Activated B cell treated with CpG ODN at 0.5 μM for 24 hours (primary cell): ENCODE measurements at regions of chr11 and their contacts with region 1.

Region 1: GRCh38 chr11:121929581-121929980 is 186.4 kb downstream of the BLID start:
- DNase-seq: no peak
- ATAC-seq: no peak
- H3K4me3 Mint-ChIP-seq: no peak overlapping the region
- H3K27ac Mint-ChIP-seq: no peak overlapping the region
- H3K4me1 Mint-ChIP-seq: no peaks in the 10 kb centered on the region
- H3K27me3 Mint-ChIP-seq: peaks cover 10% of the 10 kb centered on the region
- CTCF ChIP-seq: no peak

Region 2: GRCh38 chr11:121762820-121763219 is 166.8 kb before region 1 on chr11:
- CTCF ChIA-PET with region 1: no interaction called
- POLR2A ChIA-PET with region 1: no interaction called
- intact Hi-C with region 1: loop called (anchors 10 kb)
- DNase-seq: no peak
- ATAC-seq: no peak
- H3K4me3 Mint-ChIP-seq: no peak overlapping the region
- H3K27ac Mint-ChIP-seq: no peak overlapping the region
- H3K4me1 Mint-ChIP-seq: peaks cover 29% of the 10 kb centered on the region
- H3K27me3 Mint-ChIP-seq: no peaks in the 10 kb centered on the region
- CTCF ChIP-seq: no peak

Region 3: GRCh38 chr11:121909596-121909995 is 20.0 kb before region 1 on chr11:
- CTCF ChIA-PET with region 1: no interaction called
- POLR2A ChIA-PET with region 1: no interaction called
- intact Hi-C with region 1: no loop called
- DNase-seq: no peak
- ATAC-seq: no peak
- H3K4me3 Mint-ChIP-seq: no peak overlapping the region
- H3K27ac Mint-ChIP-seq: no peak overlapping the region
- H3K4me1 Mint-ChIP-seq: peaks cover 6% of the 10 kb centered on the region
- H3K27me3 Mint-ChIP-seq: no peaks in the 10 kb centered on the region
- CTCF ChIP-seq: no peak